Activated T-helper 1 cell treated with anti-CD3 and anti-CD28 coated beads, Interleukin-12 subunit alpha, Interleukin-12 subunit beta, Interleukin-2, Interleukin-4 antibody, amounts not matched to agents 30 ng/mL and 10 ng/mL and 1 ng/mL, durations not matched to agents 14 hours and 24 hours and 36 hours (primary cell): ENCODE measurements at regions of chr10 and their contacts with region 1.

Region 1: DNA sequence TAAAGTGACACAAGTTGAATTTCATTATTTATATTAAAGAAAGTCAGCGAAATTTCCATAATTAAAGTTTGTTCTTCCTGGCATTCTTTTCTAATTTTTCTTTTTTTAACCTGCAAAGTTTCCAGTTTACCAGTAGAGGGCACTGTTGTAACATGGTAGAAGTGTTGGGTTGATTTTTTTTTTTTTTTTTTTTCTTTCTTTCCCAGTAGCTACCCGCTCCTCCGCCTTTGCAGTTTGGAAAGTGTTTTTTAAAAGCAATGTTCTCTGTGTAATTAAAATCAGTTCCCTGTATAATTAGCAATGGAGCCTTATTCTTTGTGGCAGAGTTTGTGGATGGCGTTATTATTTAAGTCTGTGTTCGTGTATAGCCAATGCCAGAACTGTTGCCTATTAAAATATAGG is 53.7 kb downstream of the TAF3 start:
- DNase-seq: no peak
- H3K4me3 Mint-ChIP-seq: peak overlapping the region; percentile 53
- H3K27ac Mint-ChIP-seq: no peak overlapping the region
- H3K4me1 Mint-ChIP-seq: no peaks in the 10 kb centered on the region
- H3K27me3 Mint-ChIP-seq: peaks cover 4% of the 10 kb centered on the region

Region 2: DNA sequence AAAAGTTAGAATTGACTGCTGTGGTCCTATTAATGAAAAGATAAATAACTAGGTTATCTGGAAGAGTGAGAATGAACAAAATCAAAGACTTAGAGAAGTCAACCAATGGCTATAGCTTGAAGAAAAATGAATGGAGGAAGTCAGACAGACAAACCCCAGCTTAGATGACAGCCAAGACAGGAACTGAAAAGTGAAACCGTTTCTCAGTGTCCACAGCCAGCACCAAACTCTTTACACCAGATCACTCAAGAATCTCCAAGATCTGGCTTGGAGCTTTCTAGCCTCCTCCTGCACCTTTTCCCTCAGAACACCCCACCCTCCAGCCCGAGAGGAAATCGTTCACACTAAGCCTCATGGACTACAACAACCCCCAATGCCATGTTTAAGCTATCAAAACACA is 628.2 kb before region 1 on chr10:
- intact Hi-C with region 1: no loop called
- DNase-seq: no peak
- H3K4me3 Mint-ChIP-seq: peak overlapping the region; percentile 23
- H3K27ac Mint-ChIP-seq: peak overlapping the region; percentile 5
- H3K4me1 Mint-ChIP-seq: peaks cover 54% of the 10 kb centered on the region
- H3K27me3 Mint-ChIP-seq: no peaks in the 10 kb centered on the region

Region 3: DNA sequence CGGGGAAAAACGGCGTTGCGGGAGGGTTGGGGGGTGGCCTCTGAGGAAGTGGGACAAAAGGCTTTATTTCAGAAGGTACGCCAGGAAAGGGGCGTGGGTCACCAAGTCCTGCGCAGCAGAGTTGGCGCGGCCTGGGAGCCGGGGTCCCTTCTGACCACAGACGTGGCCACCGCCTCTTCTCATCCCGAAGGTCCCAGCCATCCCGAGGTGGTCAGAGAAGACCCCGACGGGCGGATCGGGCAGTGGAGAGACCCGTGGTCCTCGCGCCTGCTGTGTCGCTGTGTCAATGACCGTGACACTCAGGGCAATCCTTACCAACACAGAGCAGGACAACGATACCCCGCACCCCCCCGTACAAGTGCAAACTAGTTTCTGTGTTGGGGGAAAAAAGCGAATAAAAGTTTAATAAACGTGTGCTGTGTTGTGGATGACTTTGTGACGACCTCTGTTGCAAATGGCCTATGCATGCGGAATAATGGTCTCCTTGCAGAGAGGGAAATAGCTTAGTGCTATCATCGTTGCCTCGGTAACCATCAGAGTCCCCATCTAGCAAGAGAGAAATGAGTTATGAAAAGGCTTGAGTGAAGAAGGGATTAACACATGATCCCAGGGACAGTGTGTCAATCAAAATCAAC is 163.1 kb after region 1 on chr10:
- intact Hi-C with region 1: loop called (anchors 2 kb)
- DNase-seq: no peak
- H3K4me3 Mint-ChIP-seq: peak overlapping the region; percentile 10
- H3K27ac Mint-ChIP-seq: peak overlapping the region; percentile 76
- H3K4me1 Mint-ChIP-seq: peaks cover 20% of the 10 kb centered on the region
- H3K27me3 Mint-ChIP-seq: peaks cover 72% of the 10 kb centered on the region

Region 4: GRCh38 chr10:8473205-8473604 is 601.2 kb after region 1 on chr10:
- intact Hi-C with region 1: loop called (anchors 2 kb)
- DNase-seq: peak; percentile 5
- H3K4me3 Mint-ChIP-seq: no peak overlapping the region
- H3K27ac Mint-ChIP-seq: no peak overlapping the region
- H3K4me1 Mint-ChIP-seq: peaks cover 8% of the 10 kb centered on the region
- H3K27me3 Mint-ChIP-seq: peaks cover 33% of the 10 kb centered on the region

Region 5: GRCh38 chr10:8873310-8873709 is 1001.3 kb after region 1 on chr10:
- intact Hi-C with region 1: loop called (anchors 10 kb)
- DNase-seq: no peak
- H3K4me3 Mint-ChIP-seq: no peak overlapping the region
- H3K27ac Mint-ChIP-seq: no peak overlapping the region
- H3K4me1 Mint-ChIP-seq: no peaks in the 10 kb centered on the region
- H3K27me3 Mint-ChIP-seq: no peaks in the 10 kb centered on the region